ENCODE measurements at regions of chr14 and their contacts with region 1.

Region 1: DNA sequence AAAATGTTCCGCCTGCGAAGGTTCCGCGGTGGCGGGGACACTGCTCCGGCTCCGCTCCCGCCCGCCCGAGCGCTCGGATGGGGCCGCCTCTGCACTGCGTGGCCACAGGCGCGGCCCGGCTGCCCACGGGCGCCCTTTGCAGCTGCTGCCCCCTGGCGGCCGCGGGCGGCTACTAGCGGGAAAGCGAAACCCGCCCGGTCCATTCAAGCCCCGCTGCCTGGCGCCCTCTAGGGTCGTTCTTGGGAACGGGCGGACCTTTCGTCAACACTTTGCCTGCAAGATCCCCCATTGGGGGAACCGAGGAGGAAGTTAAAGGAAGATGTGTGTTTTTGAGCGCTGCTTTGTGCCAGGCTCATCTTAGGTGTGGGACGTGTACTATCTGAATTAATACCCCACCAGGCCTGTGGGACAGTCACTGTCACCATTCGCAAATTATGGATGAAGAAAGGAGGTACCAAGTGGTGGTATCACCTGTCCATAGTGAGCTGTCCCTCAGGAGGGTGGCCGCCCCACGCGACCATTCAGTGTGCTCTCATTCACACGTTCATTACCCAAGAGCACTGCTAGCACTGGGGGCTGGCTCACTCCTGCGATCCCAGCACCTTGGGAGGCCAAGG is 19.4 kb downstream of the GPR132 start:
- DNase-seq: peak; percentile 90 to 95 (median 93)
- H3K4me3 ChIP-seq: peak overlapping the region in 3 of 7 experiments; percentile 32 to 48 (median 44)
- H3K27ac ChIP-seq: no peak overlapping the region
- H3K4me1 ChIP-seq: peaks cover 0 to 20% (median 13%) of the 10 kb centered on the region in 4 experiments
- H3K27me3 ChIP-seq: peaks cover 0 to 4% (median 0%) of the 10 kb centered on the region in 5 experiments

Region 2: GRCh38 chr14:104735830-104736642 is 309.8 kb before region 1 on chr14:
- CTCF ChIA-PET with region 1: no interaction called
- POLR2A ChIA-PET with region 1: no interaction called
- DNase-seq: peak in 1 of 3 donors; percentile 5
- H3K4me3 ChIP-seq: no peak overlapping the region
- H3K27ac ChIP-seq: no peak overlapping the region
- H3K4me1 ChIP-seq: peaks cover 0 to 8% (median 7%) of the 10 kb centered on the region in 4 experiments
- H3K27me3 ChIP-seq: no peaks in the 10 kb centered on the region

Region 3: GRCh38 chr14:104865644-104866441 is 180.0 kb before region 1 on chr14:
- CTCF ChIA-PET with region 1: no interaction called
- POLR2A ChIA-PET with region 1: no interaction called
- DNase-seq: peak in 2 of 3 donors; percentile 10 to 14
- H3K4me3 ChIP-seq: peak overlapping the region; percentile 13 to 73 (median 57)
- H3K27ac ChIP-seq: no peak overlapping the region
- H3K4me1 ChIP-seq: peaks cover 0 to 20% (median 15%) of the 10 kb centered on the region in 4 experiments
- H3K27me3 ChIP-seq: peaks cover 0 to 57% (median 26%) of the 10 kb centered on the region in 5 experiments

Region 4: GRCh38 chr14:104932676-104933631 is 112.9 kb before region 1 on chr14:
- CTCF ChIA-PET with region 1: interaction called, 21 read pairs
- POLR2A ChIA-PET with region 1: no interaction called
- DNase-seq: peak; percentile 78 to 87 (median 85)
- H3K4me3 ChIP-seq: peak overlapping the region in 6 of 7 experiments; percentile 19 to 67 (median 52)
- H3K27ac ChIP-seq: no peak overlapping the region
- H3K4me1 ChIP-seq: peaks cover 0 to 11% (median 5%) of the 10 kb centered on the region in 4 experiments
- H3K27me3 ChIP-seq: peaks cover 0 to 13% (median 0%) of the 10 kb centered on the region in 5 experiments

Region 5: GRCh38 chr14:104956290-104956890 is 89.4 kb before region 1 on chr14:
- CTCF ChIA-PET with region 1: no interaction called
- POLR2A ChIA-PET with region 1: no interaction called
- DNase-seq: no peak
- H3K4me3 ChIP-seq: no peak overlapping the region
- H3K27ac ChIP-seq: no peak overlapping the region
- H3K4me1 ChIP-seq: no peaks in the 10 kb centered on the region
- H3K27me3 ChIP-seq: no peaks in the 10 kb centered on the region

Region 6: DNA sequence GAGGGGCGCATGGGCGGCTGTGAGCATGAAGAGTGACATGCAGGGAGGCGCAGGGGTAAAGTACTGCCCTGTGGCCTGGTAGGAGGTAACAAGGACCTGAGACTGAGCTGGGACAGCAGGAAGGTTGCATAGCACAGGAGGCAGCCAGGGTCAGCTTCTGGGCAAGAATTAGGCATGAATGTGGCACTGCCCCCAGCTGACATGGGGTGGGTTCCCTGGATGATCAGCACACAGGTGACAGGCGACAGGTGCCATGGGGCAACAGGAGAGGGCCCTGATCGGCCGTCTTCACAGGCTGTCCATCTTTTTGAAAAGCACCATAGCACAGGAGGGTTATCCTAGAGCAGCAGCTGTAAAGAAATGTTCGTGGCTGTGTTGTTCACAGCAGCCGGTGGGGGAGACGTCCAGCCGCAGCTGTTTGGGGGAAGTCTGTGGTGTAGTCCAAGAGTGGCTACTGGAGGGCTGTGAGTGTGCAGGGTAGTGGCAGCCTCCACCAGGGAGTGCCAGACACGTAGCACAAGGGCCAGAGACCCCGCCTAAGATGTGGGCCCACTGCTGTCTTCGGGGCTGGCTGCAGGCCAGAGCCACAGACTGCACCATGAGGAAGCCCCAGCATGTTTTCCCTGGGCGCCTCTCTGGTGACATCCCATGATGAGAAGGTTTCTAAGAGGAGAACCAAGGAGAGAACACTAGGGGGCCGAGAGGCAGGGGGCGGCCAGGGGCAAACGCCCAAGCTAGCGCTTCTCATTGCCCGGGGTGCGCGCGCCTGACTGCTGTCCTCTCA is 51.8 kb before region 1 on chr14:
- CTCF ChIA-PET with region 1: interaction called, 19 read pairs
- POLR2A ChIA-PET with region 1: no interaction called
- DNase-seq: peak; percentile 37 to 79 (median 72)
- H3K4me3 ChIP-seq: no peak overlapping the region
- H3K27ac ChIP-seq: no peak overlapping the region
- H3K4me1 ChIP-seq: peaks cover 0 to 3% (median 1%) of the 10 kb centered on the region in 4 experiments
- H3K27me3 ChIP-seq: no peaks in the 10 kb centered on the region

Region 7: DNA sequence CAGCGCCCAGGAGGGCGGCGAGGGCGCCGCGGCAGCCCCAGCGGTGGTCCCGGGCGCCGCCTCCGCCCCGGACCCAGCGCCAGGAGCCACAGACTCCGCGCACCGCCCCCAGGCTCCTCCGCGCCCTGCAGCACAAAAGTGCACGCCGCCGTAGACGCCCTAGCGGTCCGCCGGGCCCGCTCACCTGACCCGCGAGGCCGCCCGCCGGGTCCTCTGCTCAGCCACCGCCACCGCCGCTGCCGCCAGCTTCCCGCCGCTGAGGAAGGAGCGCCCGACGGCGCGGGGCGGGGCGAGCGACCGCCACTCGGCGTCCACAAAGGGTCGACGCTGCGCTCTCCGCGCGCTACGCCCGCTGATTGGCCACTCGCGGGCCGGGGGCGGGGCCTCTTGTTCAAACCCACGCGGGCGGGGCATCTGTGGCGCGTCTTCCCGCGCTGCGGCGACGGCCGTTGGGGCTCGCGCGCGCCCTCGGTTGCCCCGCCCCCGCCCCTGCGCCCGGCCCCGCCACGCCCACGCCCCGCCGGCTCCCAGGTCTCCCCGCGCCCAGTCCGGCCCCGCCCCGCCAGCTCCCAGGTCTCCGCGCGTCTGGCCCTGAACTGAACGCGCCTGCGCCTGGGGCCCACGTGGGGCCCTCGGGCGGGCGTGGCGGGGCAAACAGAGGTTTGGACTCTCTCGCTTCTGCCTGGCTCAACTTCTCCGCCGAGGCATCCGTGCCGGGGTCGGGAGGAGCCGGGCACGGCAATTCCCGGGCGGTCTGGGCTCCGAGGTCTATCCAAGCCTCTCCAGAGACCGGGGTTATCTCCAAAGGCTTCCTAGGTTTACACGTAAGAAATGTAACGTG is 24.8 kb before region 1 on chr14 and contains the start of gene CDCA4:
- CTCF ChIA-PET with region 1: interaction called, 44 read pairs
- POLR2A ChIA-PET with region 1: interaction called, 4 read pairs
- DNase-seq: peak; percentile 93 to 97 (median 96)
- H3K4me3 ChIP-seq: peak within 1 kb of the TSS; percentile 73 to 97 (median 79)
- H3K27ac ChIP-seq: peak within 1 kb of the TSS; percentile 58 to 81
- H3K4me1 ChIP-seq: peaks cover 7 to 45% (median 35%) of the 10 kb centered on the region in 4 experiments
- H3K27me3 ChIP-seq: no peaks in the 10 kb centered on the region

Region 8: GRCh38 chr14:105034314-105035039 is 11.3 kb before region 1 on chr14:
- CTCF ChIA-PET with region 1: interaction called, 13 read pairs
- POLR2A ChIA-PET with region 1: no interaction called
- DNase-seq: no peak
- H3K4me3 ChIP-seq: no peak overlapping the region
- H3K27ac ChIP-seq: no peak overlapping the region
- H3K4me1 ChIP-seq: peaks cover 0 to 7% (median 0%) of the 10 kb centered on the region in 4 experiments
- H3K27me3 ChIP-seq: peaks cover 0 to 5% (median 0%) of the 10 kb centered on the region in 5 experiments

Region 9: DNA sequence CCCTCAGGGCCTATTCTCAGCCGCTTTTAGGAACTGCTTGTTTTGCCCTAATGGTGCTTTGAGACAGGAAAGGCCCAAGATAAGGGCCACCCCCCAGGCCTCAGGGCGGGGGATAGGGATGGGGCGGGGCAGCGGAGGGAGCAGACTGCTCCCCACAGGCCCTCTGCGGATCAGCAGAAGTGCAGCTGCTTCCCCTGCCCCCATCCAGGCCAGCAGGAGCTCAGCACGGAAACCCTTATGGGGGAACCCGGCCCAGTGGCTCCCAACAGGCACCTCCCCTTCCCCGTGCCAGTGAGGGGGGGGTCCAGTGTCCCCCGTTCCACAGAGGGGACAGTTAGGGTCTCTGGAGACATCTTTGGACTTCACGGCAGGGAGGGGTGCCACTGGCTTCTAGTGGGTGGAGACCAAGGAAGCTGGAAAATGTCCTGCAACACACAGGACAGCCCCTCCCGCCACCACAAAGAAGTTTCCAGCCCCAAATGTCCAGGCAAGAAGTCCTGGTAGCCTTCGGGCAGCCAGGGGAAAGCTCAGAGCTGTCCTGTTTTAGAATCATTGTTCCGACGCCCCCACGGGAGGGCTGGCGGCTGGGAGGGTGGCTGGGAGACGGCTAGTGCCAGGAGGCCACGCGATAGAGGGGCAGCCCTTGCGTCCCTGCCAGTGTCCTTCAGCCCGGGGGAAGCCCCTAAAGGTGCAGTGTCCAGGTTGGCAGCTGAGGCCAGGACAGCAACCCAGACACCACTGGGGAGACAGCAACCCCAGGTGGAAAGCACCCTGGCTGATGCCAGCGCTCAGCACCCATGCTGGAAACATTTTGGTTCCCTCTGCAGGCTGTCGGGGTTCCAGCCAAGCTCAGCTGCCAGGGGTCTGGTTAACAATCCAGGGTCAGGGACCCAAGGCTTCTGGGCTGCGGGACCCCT is 29.8 kb after region 1 on chr14:
- CTCF ChIA-PET with region 1: interaction called, 49 read pairs
- POLR2A ChIA-PET with region 1: no interaction called
- DNase-seq: peak; percentile 83 to 96 (median 96)
- H3K4me3 ChIP-seq: peak overlapping the region in 6 of 7 experiments; percentile 26 to 61 (median 40)
- H3K27ac ChIP-seq: peak overlapping the region in 1 of 2 experiments; percentile 33
- H3K4me1 ChIP-seq: peaks cover 3 to 41% (median 34%) of the 10 kb centered on the region in 4 experiments
- H3K27me3 ChIP-seq: no peaks in the 10 kb centered on the region

Region 10: GRCh38 chr14:105144666-105145380 is 99.0 kb after region 1 on chr14:
- CTCF ChIA-PET with region 1: no interaction called
- POLR2A ChIA-PET with region 1: no interaction called
- DNase-seq: no peak
- H3K4me3 ChIP-seq: no peak overlapping the region
- H3K27ac ChIP-seq: no peak overlapping the region
- H3K4me1 ChIP-seq: peaks cover 0 to 4% (median 1%) of the 10 kb centered on the region in 4 experiments
- H3K27me3 ChIP-seq: no peaks in the 10 kb centered on the region

Measured in common myeloid progenitor, CD34-positive (primary cell).